Activated naive CD4-positive, alpha-beta T cell treated with anti-CD3 and anti-CD28 coated beads for 36 hours (primary cell): ENCODE measurements at regions of chrX and their contacts with region 1.

Region 1: GRCh38 chrX:7925867-7926472 is 1.2 kb downstream of the PNPLA4 start:
- DNase-seq: peak; percentile 70
- H3K4me3 Mint-ChIP-seq: peak overlapping the region; percentile 38
- H3K27ac Mint-ChIP-seq: no peak overlapping the region
- H3K4me1 Mint-ChIP-seq: peaks cover 11% of the 10 kb centered on the region
- H3K27me3 Mint-ChIP-seq: no peaks in the 10 kb centered on the region

Region 2: DNA sequence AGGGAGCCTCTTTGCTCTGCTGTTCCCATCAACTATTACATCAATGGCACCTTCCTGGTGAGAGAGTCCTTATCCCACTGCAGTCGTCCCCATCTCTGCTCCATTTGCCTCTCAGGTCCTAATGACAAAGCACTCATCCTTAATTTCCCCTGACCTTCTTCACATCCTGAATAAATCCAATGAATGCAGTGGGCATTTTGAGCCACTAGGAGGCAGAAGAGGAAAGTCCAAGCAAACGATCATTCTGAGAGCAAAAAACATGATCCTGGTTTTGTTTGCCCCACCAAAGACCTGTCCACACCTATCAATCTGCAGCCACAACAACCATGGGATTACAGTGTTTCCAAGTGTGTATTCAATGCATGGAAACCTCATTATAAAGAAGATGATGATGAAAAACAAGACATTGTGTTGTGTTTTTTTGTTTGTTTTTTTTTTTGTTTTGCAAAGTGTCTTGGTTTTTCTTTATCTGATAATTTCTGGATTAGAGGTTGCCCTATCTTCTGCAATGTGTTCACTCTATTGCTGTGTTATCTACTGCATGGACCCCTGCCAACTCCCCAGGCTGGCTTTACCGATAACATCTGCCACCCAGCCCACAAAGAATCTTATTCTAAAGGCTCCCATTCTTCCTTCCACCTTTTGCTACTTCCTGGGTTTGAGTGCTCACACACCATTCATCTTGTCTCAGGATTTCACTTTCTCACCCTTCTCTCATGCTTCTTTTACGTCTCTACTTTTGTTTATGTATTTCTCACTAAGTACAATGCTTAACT is 1904.5 kb before region 1 on chrX:
- CTCF ChIA-PET with region 1: no interaction called
- intact Hi-C with region 1: loop called (anchors 2 kb)
- DNase-seq: peak; percentile 41
- H3K4me3 Mint-ChIP-seq: no peak overlapping the region
- H3K27ac Mint-ChIP-seq: no peak overlapping the region
- H3K4me1 Mint-ChIP-seq: peaks cover 3% of the 10 kb centered on the region
- H3K27me3 Mint-ChIP-seq: peaks cover 3% of the 10 kb centered on the region

Region 3: DNA sequence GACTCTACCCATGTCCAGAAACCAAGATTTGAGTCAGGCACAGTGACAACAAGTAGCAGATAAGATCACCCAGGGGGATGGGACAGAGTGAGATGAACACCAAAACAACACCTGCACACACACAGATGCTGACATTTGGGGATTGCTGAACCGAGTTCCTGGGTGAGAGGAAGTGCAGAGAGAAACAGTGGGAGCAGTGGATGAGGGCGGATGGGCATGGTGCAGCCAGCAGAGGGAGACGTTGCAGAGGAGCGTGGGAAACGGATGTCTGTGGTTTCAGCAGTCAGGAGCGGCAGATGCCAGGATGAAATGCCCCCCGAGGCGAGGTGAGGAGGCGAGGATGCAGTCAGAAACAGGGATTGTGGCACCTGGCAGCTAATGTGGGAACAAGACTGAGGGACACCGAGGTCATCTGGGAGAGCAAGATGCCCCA is 857.0 kb before region 1 on chrX:
- CTCF ChIA-PET with region 1: no interaction called
- intact Hi-C with region 1: loop called (anchors 1 kb)
- DNase-seq: peak; percentile 57
- H3K4me3 Mint-ChIP-seq: no peak overlapping the region
- H3K27ac Mint-ChIP-seq: no peak overlapping the region
- H3K4me1 Mint-ChIP-seq: peaks cover 25% of the 10 kb centered on the region
- H3K27me3 Mint-ChIP-seq: no peaks in the 10 kb centered on the region

Region 4: GRCh38 chrX:7132335-7133049 is 793.5 kb before region 1 on chrX:
- CTCF ChIA-PET with region 1: no interaction called
- intact Hi-C with region 1: loop called (anchors 2 kb)
- DNase-seq: peak; percentile 23
- H3K4me3 Mint-ChIP-seq: no peak overlapping the region
- H3K27ac Mint-ChIP-seq: no peak overlapping the region
- H3K4me1 Mint-ChIP-seq: peaks cover 23% of the 10 kb centered on the region
- H3K27me3 Mint-ChIP-seq: no peaks in the 10 kb centered on the region

Region 5: GRCh38 chrX:7746861-7747260 is 179.1 kb before region 1 on chrX:
- CTCF ChIA-PET with region 1: no interaction called
- intact Hi-C with region 1: no loop called
- DNase-seq: no peak
- H3K4me3 Mint-ChIP-seq: no peak overlapping the region
- H3K27ac Mint-ChIP-seq: no peak overlapping the region
- H3K4me1 Mint-ChIP-seq: no peaks in the 10 kb centered on the region
- H3K27me3 Mint-ChIP-seq: no peaks in the 10 kb centered on the region